ENCODE measurements at regions of chr19 and their contacts with region 1.

Region 1: DNA sequence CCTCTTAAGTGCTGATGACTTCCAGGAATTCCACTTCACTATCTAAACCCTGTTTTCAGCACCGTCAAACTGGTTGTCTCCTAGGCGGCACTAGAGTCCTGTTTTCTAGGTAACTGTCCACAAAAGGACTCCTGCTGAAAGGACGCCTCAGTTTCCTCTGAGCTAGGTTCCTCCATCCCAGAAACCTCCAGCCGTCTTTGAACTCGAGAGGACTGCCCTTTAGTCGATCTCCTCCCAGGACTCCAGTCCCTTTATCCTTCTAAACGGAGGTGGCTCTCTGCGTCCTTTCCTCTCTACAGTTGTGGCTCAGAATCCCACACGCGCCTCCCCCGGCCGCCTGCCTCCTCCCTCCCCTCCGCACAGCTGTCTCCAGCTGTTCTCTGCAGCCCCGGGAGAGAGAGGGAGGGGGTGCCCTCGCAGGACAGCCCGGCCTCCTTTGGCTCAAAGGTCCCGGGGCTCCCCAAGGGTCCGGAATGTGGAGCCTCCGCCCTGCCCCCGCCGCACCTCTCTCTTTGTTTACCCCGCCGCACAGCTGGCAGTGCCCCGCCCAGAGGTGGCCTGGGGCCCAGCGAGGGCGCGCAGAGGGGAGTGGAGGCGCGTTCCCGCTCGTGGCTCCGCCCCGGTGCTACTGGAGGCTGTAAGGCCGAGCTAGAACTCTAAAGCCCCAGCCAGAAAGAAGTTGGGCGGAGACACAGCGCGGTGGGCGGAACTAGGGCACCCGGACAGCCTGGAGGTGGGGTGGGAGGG is 2.4 kb downstream of the LTBP4 start:
- DNase-seq: peak; percentile 97
- ATAC-seq: peak; percentile 75
- H3K4me3 ChIP-seq: peak overlapping the region in 4 of 5 experiments; percentile 27 to 66 (median 34)
- H3K4me3 Mint-ChIP-seq: peak overlapping the region; percentile 87
- H3K27ac ChIP-seq: peak overlapping the region in 1 of 2 donors; percentile 32
- H3K27ac Mint-ChIP-seq: peak overlapping the region; percentile 83
- H3K4me1 ChIP-seq: peaks cover 69 to 76% of the 10 kb centered on the region in 2 donors
- H3K4me1 Mint-ChIP-seq: peaks cover 68% of the 10 kb centered on the region
- H3K27me3 ChIP-seq: peaks cover 0 to 43% (median 26%) of the 10 kb centered on the region in 4 experiments
- H3K27me3 Mint-ChIP-seq: peaks cover 23% of the 10 kb centered on the region
- CTCF ChIP-seq: no peak

Region 2: DNA sequence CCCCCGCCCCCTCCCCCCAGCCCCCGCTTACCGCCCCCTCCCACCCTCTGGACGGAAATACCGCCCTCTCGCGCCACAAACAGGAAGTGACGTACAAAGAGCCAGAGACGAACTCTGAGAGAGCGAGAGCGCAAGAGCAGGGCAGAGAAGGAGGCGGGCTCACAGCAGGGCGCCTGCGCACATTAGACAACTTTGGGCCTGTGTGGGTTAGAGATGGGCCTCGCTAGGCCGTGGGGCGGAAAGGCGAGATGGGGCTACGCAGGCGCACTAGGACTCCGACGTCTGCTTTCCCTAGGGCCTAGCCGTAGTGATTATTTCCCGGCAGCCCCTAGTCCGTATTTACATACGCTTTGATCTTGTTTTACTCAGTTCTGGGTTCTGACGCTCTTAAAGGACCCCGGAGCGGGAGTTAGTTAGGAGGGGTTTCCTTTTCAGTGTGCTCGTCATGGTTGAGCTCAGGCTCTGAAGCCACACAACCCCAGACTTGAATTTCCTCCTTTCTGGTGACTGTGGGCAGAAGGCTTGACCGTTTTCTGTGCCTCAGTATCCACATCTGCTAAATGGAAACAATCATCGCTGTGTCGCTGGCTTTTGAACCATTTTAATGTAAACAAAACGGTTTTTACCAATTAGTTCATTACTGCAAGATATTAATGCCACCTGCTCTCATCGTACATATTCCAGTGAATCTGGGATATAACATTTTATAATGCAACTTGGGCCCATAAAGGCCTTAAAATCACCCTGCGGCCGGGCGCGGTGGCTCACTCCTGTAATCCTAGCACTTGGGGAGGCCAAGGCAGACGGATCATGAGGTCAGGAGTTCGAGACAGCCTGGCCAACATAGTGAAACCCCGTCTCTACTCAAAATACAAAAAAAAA is 318.0 kb before region 1 on chr19:
- CTCF ChIA-PET with region 1: interaction called, 3 read pairs
- POLR2A ChIA-PET with region 1: interaction called, 4 read pairs
- intact Hi-C with region 1: loop called (anchors 2 kb)
- DNase-seq: peak; percentile 100
- ATAC-seq: peak; percentile 74
- H3K4me3 ChIP-seq: peak overlapping the region in 4 of 5 experiments; percentile 68 to 89 (median 78)
- H3K4me3 Mint-ChIP-seq: peak overlapping the region; percentile 87
- H3K27ac ChIP-seq: peak overlapping the region; percentile 99 to 100
- H3K27ac Mint-ChIP-seq: peak overlapping the region; percentile 97
- H3K4me1 ChIP-seq: peaks cover 40 to 54% of the 10 kb centered on the region in 2 donors
- H3K4me1 Mint-ChIP-seq: peaks cover 53% of the 10 kb centered on the region
- H3K27me3 ChIP-seq: no peaks in the 10 kb centered on the region
- H3K27me3 Mint-ChIP-seq: no peaks in the 10 kb centered on the region
- CTCF ChIP-seq: no peak

Region 3: GRCh38 chr19:40549007-40549708 is 54.4 kb before region 1 on chr19:
- CTCF ChIA-PET with region 1: interaction called, 22 read pairs
- POLR2A ChIA-PET with region 1: interaction called, 3 read pairs
- intact Hi-C with region 1: loop called (anchors 1 kb)
- DNase-seq: peak; percentile 70
- ATAC-seq: peak; percentile 82
- H3K4me3 ChIP-seq: no peak overlapping the region
- H3K4me3 Mint-ChIP-seq: no peak overlapping the region
- H3K27ac ChIP-seq: no peak overlapping the region
- H3K27ac Mint-ChIP-seq: peak overlapping the region; percentile 22
- H3K4me1 ChIP-seq: peaks cover 4% of the 10 kb centered on the region in 2 donors
- H3K4me1 Mint-ChIP-seq: peaks cover 10% of the 10 kb centered on the region
- H3K27me3 ChIP-seq: peaks cover 0 to 49% (median 28%) of the 10 kb centered on the region in 4 experiments
- H3K27me3 Mint-ChIP-seq: peaks cover 48% of the 10 kb centered on the region
- CTCF ChIP-seq: peak; percentile 55

Region 4: DNA sequence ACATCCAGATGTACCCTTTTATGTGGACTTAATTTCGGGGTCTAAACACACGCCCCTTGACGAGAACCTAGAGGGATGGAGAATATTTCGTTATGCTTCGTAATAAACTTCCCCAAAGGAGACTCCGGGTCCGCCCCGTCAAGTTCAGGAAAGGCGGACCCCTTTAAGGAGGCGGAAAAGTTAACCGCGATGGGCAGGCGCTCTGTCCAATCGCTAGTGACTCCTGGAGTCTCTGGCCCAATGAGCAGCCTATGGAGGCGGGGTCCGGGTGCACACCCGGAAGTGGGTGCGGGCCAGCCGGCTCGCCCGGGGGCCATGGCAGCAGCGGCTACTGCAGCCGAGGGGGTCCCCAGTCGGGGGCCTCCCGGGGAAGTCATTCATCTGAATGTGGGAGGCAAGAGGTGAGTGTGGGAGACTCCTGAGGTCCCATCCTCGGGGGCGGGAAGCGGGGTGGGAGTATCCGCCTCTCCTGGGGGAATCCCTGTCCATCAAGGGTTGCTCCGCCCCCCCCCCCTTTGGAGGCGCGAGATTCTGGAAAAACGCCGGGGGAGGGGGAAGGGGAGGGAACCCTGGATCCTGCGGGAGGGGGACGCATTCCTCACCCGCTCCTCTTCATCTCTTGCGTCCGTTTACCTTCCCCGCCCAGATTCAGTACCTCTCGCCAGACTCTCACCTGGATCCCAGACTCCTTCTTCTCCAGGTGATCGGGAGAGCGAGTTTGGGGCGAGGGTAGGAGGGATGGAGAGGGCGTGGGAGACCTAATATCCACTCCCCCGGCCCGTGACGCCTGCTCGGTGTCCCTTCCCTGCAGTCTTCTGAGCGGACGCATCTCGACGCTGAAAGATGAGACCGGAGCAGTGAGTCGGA is 26.7 kb before region 1 on chr19 and contains the start of gene SHKBP1:
- CTCF ChIA-PET with region 1: interaction called, 11 read pairs
- POLR2A ChIA-PET with region 1: interaction called, 19 read pairs
- intact Hi-C with region 1: loop called (anchors 1 kb)
- DNase-seq: peak; percentile 96
- ATAC-seq: peak; percentile 98
- H3K4me3 ChIP-seq: peak within 1 kb of the TSS; percentile 52 to 90 (median 88)
- H3K4me3 Mint-ChIP-seq: peak within 1 kb of the TSS; percentile 83
- H3K27ac ChIP-seq: peak within 1 kb of the TSS; percentile 68 to 77
- H3K27ac Mint-ChIP-seq: peak within 1 kb of the TSS; percentile 89
- H3K4me1 ChIP-seq: peaks cover 18 to 42% of the 10 kb centered on the region in 2 donors
- H3K4me1 Mint-ChIP-seq: peaks cover 34% of the 10 kb centered on the region
- H3K27me3 ChIP-seq: no peaks in the 10 kb centered on the region
- H3K27me3 Mint-ChIP-seq: no peaks in the 10 kb centered on the region
- CTCF ChIP-seq: no peak
- total RNA-seq, gene SHKBP1: 179 and 192 TPM in 2 replicates

Region 5: GRCh38 chr19:42396381-42397262 is 1793.1 kb after region 1 on chr19:
- CTCF ChIA-PET with region 1: no interaction called
- POLR2A ChIA-PET with region 1: interaction called, 14 read pairs
- intact Hi-C with region 1: no loop called
- DNase-seq: peak; percentile 95
- ATAC-seq: peak; percentile 97
- H3K4me3 ChIP-seq: peak overlapping the region; percentile 83 to 93 (median 89)
- H3K4me3 Mint-ChIP-seq: peak overlapping the region; percentile 95
- H3K27ac ChIP-seq: peak overlapping the region; percentile 68 to 77
- H3K27ac Mint-ChIP-seq: peak overlapping the region; percentile 95
- H3K4me1 ChIP-seq: peaks cover 22 to 34% of the 10 kb centered on the region in 2 donors
- H3K4me1 Mint-ChIP-seq: peaks cover 39% of the 10 kb centered on the region
- H3K27me3 ChIP-seq: no peaks in the 10 kb centered on the region
- H3K27me3 Mint-ChIP-seq: peaks cover 3% of the 10 kb centered on the region
- CTCF ChIP-seq: no peak